Tibial artery (tissue), 4 donors: ENCODE measurements at regions of chr4 and their contacts with region 1.

Region 1: GRCh38 chr4:139711461-139711860 is 45.8 kb downstream of the MGST2 start:
- DNase-seq: no peak
- H3K4me3 ChIP-seq: no peak overlapping the region
- H3K27ac ChIP-seq: peak overlapping the region in 1 of 2 donors; percentile 11
- H3K4me1 ChIP-seq: peaks cover 0 to 31% (median 1%) of the 10 kb centered on the region in 4 donors
- H3K27me3 ChIP-seq: no peaks in the 10 kb centered on the region
- CTCF ChIP-seq: no peak

Region 2: DNA sequence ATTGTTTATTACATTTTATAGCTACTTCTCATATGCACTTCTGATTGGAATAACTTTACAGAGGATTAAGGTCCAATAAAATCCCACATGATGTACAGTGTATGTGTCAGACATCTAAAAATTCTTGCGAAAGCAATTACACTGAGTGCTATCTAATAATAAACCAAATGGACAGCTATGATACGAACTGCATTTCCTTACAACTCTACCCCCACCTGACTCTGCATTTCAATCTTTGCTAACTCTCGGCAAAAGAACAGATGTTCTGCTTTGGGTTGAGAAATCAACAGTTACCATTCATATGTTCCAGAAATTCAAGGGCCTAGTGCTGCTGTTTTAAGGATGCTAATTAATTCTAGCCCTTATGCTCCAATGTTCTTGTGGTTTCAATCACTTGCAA is 983.7 kb before region 1 on chr4:
- intact Hi-C with region 1: no loop called
- DNase-seq: no peak
- H3K4me3 ChIP-seq: no peak overlapping the region
- H3K27ac ChIP-seq: no peak overlapping the region
- H3K4me1 ChIP-seq: no peaks in the 10 kb centered on the region
- H3K27me3 ChIP-seq: no peaks in the 10 kb centered on the region
- CTCF ChIP-seq: no peak

Region 3: DNA sequence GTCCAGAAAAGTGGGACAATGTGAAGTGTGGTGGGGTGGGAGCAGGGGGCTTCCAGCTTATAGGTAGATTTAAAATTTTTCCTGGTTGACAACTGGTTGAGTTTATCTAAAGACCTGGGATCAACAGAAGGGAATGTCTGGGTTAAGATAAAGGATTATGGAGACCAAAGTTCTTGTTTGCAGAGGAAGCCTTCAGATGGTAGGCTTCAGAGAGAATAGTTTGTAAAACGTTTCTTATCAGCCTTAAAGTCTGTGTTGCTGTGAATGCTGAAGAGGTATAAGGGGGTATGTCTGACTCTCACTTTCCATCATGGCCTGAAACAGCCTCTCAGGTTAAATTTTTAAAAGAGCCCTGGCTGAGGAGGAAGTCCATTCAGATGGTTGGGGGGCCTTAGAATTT is 25.3 kb before region 1 on chr4:
- intact Hi-C with region 1: loop called (anchors 2 kb)
- DNase-seq: no peak
- H3K4me3 ChIP-seq: no peak overlapping the region
- H3K27ac ChIP-seq: peak overlapping the region; percentile 11 to 26
- H3K4me1 ChIP-seq: peaks cover 0 to 39% (median 19%) of the 10 kb centered on the region in 4 donors
- H3K27me3 ChIP-seq: no peaks in the 10 kb centered on the region
- CTCF ChIP-seq: no peak

Region 4: GRCh38 chr4:139950568-139950967 is 239.1 kb after region 1 on chr4:
- intact Hi-C with region 1: no loop called
- DNase-seq: no peak
- H3K4me3 ChIP-seq: no peak overlapping the region
- H3K27ac ChIP-seq: no peak overlapping the region
- H3K4me1 ChIP-seq: peaks cover 0 to 35% (median 15%) of the 10 kb centered on the region in 4 donors
- H3K27me3 ChIP-seq: no peaks in the 10 kb centered on the region
- CTCF ChIP-seq: no peak